ENCODE measurements at regions of chr1 and their contacts with region 1.

Region 1: DNA sequence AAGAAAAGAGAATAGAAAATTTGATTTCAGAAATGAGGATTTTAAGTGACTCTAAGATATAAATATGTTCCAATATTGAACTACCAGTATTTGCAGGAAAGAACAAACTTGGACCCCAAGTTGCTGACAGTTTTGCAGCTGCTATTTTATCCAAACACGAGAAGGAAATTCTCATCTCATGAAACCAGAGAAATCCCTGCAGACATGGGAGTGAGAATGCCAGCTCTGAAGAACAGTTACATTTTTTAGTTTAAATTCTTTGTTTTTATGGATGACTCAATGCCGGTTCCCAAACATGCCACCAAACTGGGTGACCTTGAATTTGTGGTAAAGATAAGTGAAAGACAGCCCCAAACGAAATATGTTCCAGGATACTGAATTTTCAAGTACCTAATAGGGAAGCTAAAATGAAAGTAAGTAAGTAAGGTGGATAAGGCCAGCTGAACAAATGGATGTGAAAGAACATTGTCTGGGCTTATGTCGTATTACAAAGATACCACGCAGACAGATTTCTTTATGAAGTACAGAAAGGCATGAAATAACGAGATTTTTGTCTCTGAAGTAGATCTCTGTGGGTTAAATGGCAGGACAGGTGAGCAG is 19.9 kb downstream of the TLR5 start:
- H3K4me3 ChIP-seq: no peak overlapping the region
- H3K27ac ChIP-seq: no peak overlapping the region
- H3K4me1 ChIP-seq: no peaks in the 10 kb centered on the region
- CTCF ChIP-seq: no peak

Region 2: GRCh38 chr1:222739465-222739864 is 383.6 kb before region 1 on chr1:
- CTCF ChIA-PET with region 1: interaction called, 12 read pairs
- POLR2A ChIA-PET with region 1: no interaction called
- H3K4me3 ChIP-seq: no peak overlapping the region
- H3K27ac ChIP-seq: no peak overlapping the region
- H3K4me1 ChIP-seq: no peaks in the 10 kb centered on the region
- CTCF ChIP-seq: no peak

Region 3: GRCh38 chr1:222792744-222793143 is 330.4 kb before region 1 on chr1:
- CTCF ChIA-PET with region 1: interaction called, 23 read pairs
- POLR2A ChIA-PET with region 1: no interaction called
- H3K4me3 ChIP-seq: no peak overlapping the region
- H3K27ac ChIP-seq: no peak overlapping the region
- H3K4me1 ChIP-seq: no peaks in the 10 kb centered on the region
- CTCF ChIP-seq: peak; percentile 51; the same call in 1 of the 2 replicates

Region 4: DNA sequence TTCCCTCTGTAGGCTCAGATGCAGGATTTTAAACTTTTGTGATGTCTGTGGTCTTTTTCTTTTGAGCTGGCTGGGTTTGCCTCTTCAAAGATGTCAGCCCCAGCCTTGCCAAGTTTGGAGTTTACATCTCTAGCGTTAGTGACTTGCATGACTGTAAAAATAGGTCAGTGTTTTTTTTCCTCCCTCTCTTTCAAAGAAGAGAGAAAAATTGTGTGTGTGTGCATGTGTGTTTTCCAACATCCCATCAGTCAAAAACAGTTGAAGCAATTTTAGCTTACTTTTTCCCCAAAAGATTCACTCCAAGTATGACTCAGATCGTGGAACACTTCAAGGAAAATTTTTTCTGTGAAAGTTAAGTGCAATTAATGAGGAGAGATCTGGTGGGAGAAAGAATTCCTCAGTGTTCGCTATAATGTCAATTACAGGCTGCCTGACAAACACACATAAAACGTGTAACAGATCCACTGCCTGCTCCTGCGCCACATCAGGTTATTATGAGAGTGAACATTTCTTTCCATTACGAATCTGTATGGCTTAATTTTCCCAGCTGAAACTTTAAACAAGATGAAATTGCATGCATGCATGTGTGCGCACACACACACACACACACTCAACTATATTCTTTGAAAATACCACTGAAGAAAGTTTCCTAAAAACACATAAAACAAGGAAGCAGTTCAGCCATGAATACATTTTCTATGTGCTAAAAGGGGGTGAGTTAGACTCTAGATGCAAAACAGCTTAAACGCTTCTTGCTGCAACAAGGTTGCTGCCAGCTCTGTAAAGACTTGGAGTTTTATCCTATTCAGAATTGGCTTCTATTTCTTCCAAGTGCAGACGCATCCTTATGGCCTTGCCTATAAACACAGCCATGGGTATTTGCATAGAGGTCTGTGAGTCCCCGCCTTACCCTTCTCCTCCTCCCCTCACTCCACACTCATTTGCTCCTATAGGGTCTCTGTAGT is 35.5 kb before region 1 on chr1:
- CTCF ChIA-PET with region 1: interaction called, 239 read pairs
- POLR2A ChIA-PET with region 1: interaction called, 11 read pairs
- H3K4me3 ChIP-seq: no peak overlapping the region
- H3K27ac ChIP-seq: no peak overlapping the region
- H3K4me1 ChIP-seq: no peaks in the 10 kb centered on the region
- CTCF ChIP-seq: no peak

Region 5: DNA sequence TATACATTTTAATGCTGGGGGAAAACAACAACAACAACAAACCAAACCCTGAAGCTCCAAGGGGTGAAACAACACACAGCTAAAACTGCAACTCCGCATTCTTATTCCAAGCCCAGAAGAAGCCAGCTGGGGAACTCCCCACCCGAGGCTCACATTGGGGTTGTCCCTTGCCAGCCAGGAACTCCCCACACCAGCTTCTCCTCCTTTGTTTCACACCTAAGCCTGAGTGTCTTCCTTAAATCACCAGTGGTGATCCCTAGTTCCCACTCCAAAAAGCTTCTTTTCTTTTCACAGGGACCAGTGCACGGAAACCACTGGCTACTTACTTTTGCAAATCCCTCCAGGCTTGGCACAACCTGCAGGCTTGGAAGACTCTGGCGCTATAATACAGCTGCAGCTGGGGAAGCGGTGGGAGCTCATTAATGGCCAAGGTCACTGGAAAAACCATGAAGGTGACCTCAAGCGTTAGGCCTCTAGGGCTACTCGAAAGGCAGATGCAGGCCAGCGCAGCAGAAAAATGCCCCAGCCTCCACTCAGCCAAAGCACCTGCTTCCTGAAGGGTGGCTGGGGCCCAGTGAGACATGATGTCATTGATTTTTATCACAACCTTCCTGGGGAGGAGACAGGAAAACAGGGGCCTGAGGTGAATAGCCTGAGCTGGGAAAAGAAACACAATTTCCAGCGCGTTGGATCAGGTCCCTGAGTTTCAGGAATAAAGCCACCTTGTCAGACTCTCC is 20.1 kb before region 1 on chr1:
- CTCF ChIA-PET with region 1: interaction called, 81 read pairs
- POLR2A ChIA-PET with region 1: interaction called, 4 read pairs
- H3K4me3 ChIP-seq: no peak overlapping the region
- H3K27ac ChIP-seq: peak overlapping the region; percentile 58; the same call in 1 of the 2 replicates
- H3K4me1 ChIP-seq: peaks cover 11% of the 10 kb centered on the region
- CTCF ChIP-seq: no peak

Region 6: GRCh38 chr1:223341121-223341520 is 218.0 kb after region 1 on chr1:
- CTCF ChIA-PET with region 1: no interaction called
- POLR2A ChIA-PET with region 1: no interaction called
- H3K4me3 ChIP-seq: no peak overlapping the region
- H3K27ac ChIP-seq: no peak overlapping the region
- H3K4me1 ChIP-seq: no peaks in the 10 kb centered on the region
- CTCF ChIP-seq: no peak

Region 7: DNA sequence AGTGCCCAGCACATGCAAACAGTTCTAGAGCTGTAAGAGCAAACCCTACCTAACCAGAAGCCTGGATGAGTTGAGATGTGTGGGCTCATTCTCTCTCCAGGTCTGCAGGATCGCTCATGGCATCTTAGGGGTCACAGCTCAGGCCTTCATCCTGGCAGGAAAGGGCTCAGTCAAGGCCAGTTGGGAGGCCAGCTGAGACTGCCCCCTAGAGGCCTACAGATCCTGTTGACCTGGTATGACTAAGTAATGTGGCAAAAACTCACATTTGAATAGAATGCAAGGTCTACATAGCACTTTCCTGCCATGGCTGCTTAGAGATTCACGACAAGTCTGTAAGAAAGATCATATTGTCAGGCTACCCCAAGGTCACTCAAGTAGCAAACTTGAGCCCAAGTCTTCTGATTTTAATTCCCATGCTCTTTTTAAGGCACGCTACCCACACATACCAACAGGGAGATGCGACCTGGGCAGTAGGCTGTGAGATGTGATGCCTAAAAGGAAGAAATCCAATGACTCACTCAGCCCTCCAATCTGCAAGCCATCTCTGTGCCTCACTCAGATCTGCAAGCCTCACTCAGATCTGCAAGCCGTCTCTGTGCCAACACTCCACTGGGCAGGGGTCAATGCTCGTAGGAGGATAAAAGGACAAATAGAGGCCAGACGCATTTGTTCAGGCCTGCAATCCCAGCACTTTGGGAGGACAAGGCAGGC is 547.5 kb after region 1 on chr1:
- CTCF ChIA-PET with region 1: interaction called, 11 read pairs
- POLR2A ChIA-PET with region 1: no interaction called
- H3K4me3 ChIP-seq: no peak overlapping the region
- H3K27ac ChIP-seq: no peak overlapping the region
- H3K4me1 ChIP-seq: no peaks in the 10 kb centered on the region
- CTCF ChIP-seq: peak; percentile 44; the same call in 1 of the 2 replicates

Region 8: GRCh38 chr1:224329842-224330753 is 1207.0 kb after region 1 on chr1 and contains the start of gene NVL:
- CTCF ChIA-PET with region 1: no interaction called
- POLR2A ChIA-PET with region 1: no interaction called
- H3K4me3 ChIP-seq: peak within 1 kb of the TSS; percentile 79
- H3K27ac ChIP-seq: peak within 1 kb of the TSS; percentile 97
- H3K4me1 ChIP-seq: peaks cover 3% of the 10 kb centered on the region; the same call in 1 of the 2 replicates
- CTCF ChIP-seq: no peak

Measured in HEK293 (cell line).